ENCODE measurements at regions of chr3 and their contacts with region 1.

Region 1: DNA sequence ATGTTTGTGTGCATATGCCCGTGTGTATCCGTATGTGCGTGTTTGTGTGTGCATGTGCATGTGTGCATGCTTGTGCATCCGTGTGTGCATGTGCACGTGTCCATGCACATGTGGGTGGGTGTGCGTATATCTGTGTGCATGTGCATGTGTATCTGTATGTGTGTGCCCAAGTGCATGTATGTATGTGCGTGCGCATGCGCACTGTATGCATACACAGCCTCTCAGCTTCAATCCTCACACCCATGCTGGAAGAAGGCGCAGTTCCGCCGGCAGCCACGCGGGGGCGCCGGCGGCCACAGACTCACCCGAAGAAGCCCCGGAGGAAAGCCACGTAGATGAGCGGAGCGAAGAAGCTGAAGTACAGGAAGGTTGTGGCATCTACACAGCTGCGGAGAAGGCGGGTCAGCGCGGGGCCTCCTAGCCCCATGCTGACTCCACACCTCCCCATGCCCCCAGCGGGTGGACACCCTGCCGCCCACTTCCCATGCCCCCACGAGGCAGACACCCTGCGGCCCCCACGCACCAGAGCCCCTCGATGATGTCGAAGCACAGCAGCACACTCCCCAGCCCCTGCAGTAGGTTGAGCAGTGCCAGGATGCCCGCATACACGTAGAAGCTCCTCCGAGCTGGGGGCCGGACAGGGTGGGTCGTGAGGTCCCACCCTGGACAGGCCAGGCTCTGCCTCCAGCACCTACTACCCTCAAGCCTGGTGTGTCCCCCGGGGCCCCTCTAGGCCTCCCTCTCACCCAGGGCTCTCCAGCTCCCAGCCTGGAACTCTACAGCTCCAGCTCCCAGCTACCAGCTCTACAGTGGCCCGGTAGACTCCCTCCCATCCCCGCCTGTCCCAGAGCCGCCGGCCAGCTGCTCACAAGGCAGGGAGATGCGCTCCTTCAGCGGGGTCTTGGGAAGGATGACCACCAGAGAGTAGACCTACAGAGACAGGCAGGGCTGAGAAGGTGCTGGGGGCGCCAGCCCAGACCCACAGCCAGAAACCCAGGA is 15.4 kb downstream of the TPRA1 start:
- DNase-seq: peak; percentile 82 to 87 (median 84)
- H3K4me3 ChIP-seq: no peak overlapping the region
- H3K4me3 Mint-ChIP-seq: peak overlapping the region in 7 of 8 donors; percentile 14 to 63 (median 48)
- H3K27ac ChIP-seq: peak overlapping the region; percentile 16
- H3K27ac Mint-ChIP-seq: peak overlapping the region; percentile 24 to 92 (median 82)
- H3K4me1 ChIP-seq: peaks cover 9% of the 10 kb centered on the region
- H3K4me1 Mint-ChIP-seq: peaks cover 6 to 17% (median 11%) of the 10 kb centered on the region in 4 donors
- H3K27me3 ChIP-seq: no peaks in the 10 kb centered on the region
- H3K27me3 Mint-ChIP-seq: no peaks in the 10 kb centered on the region

Region 2: GRCh38 chr3:127529346-127530188 is 45.6 kb before region 1 on chr3:
- CTCF ChIA-PET with region 1: no interaction called
- POLR2A ChIA-PET with region 1: no interaction called
- intact Hi-C with region 1: no loop called
- DNase-seq: no peak
- H3K4me3 ChIP-seq: no peak overlapping the region
- H3K4me3 Mint-ChIP-seq: no peak overlapping the region
- H3K27ac ChIP-seq: no peak overlapping the region
- H3K27ac Mint-ChIP-seq: no peak overlapping the region
- H3K4me1 ChIP-seq: no peaks in the 10 kb centered on the region
- H3K4me1 Mint-ChIP-seq: no peaks in the 10 kb centered on the region
- H3K27me3 ChIP-seq: no peaks in the 10 kb centered on the region
- H3K27me3 Mint-ChIP-seq: peaks cover 4 to 16% of the 10 kb centered on the region in 2 donors

Region 3: DNA sequence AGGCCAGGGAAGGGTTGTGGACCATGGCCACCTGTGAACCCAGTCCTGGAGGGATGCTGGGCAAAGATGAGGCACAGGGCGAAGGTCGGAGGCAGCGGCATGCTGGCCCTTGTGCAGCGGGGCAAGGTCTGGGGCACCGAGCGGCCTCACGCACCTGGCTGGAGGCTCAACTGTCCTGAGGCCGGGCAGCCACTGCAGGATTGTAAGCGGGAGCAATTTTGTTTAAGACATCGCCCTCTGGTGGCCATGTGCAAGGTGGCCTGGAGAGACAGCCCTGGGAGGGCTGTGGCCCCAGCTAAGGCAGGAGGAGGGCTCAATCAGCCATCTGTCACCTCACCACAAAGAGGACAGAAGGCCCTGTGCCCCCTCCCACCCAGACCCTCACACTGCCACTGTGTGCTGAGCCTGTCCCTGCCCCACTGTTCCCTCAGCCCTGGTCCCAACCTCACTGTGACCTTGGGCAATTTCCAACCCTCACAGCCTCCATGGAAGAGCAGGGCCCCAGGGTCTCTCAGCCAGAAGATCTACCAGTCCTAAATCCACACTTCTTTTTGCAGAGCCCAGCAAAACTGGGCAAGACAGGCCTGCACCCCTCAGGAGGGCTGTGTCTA is 30.9 kb before region 1 on chr3:
- CTCF ChIA-PET with region 1: interaction called, 20 read pairs
- POLR2A ChIA-PET with region 1: no interaction called
- intact Hi-C with region 1: no loop called
- DNase-seq: peak; percentile 49 to 56 (median 50)
- H3K4me3 ChIP-seq: no peak overlapping the region
- H3K4me3 Mint-ChIP-seq: no peak overlapping the region
- H3K27ac ChIP-seq: no peak overlapping the region
- H3K27ac Mint-ChIP-seq: peak overlapping the region in 1 of 7 donors; percentile 10
- H3K4me1 ChIP-seq: peaks cover 14% of the 10 kb centered on the region
- H3K4me1 Mint-ChIP-seq: peaks cover 3 to 25% (median 11%) of the 10 kb centered on the region in 4 donors
- H3K27me3 ChIP-seq: no peaks in the 10 kb centered on the region
- H3K27me3 Mint-ChIP-seq: peaks cover 1 to 3% of the 10 kb centered on the region in 2 donors

Region 4: GRCh38 chr3:127598841-127599570 is 23.8 kb after region 1 on chr3:
- CTCF ChIA-PET with region 1: interaction called, 45 read pairs
- POLR2A ChIA-PET with region 1: interaction called, 3 read pairs
- intact Hi-C with region 1: loop called (anchors 1 kb)
- DNase-seq: no peak
- H3K4me3 ChIP-seq: peak overlapping the region; percentile 47 to 62
- H3K4me3 Mint-ChIP-seq: peak overlapping the region; percentile 78 to 90 (median 86)
- H3K27ac ChIP-seq: peak overlapping the region; percentile 51
- H3K27ac Mint-ChIP-seq: peak overlapping the region; percentile 22 to 97 (median 87)
- H3K4me1 ChIP-seq: peaks cover 19% of the 10 kb centered on the region
- H3K4me1 Mint-ChIP-seq: peaks cover 5 to 29% (median 15%) of the 10 kb centered on the region in 4 donors
- H3K27me3 ChIP-seq: no peaks in the 10 kb centered on the region
- H3K27me3 Mint-ChIP-seq: no peaks in the 10 kb centered on the region

Region 5: DNA sequence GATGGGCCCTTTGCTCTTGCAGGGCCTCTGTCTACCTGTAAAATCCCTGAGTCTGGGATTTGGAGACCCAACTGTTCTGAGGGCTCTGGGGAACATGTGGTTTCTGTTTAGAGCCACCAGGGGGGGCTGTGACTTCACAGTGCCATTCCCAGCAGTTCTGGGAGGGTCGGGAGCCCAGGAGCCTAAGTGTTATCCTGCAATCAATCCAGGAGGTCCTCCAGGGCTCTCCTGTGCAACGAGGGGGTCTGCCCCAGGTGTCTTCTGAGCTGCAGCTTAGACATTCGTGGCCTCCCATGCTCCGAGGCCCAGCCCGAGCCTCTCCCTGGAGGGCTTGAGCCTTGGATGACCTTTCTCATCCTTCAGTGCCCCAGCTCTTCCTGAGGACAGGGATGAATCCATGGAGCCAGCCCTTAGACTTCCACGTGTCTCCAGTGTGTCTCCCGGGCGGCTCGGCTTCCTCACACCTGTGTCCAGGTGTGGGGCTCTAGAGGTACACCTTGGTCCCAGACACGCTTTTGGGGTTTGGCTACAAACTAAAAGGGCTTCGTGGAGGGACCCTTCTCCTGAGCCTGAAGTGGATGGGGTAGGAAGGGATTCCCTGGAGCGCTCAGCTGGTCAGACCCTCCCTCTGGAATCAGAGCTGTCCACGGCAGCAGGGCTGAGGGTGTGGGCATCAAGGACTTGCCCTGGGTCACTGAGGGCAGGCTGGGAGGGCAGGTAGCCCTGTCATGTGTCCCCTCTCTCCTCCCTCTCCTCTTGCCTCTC is 77.2 kb after region 1 on chr3:
- CTCF ChIA-PET with region 1: interaction called, 5 read pairs
- POLR2A ChIA-PET with region 1: no interaction called
- intact Hi-C with region 1: loop called (anchors 1 kb)
- DNase-seq: peak in 3 of 5 donors; percentile 17 to 37 (median 22)
- H3K4me3 ChIP-seq: no peak overlapping the region
- H3K4me3 Mint-ChIP-seq: no peak overlapping the region
- H3K27ac ChIP-seq: no peak overlapping the region
- H3K27ac Mint-ChIP-seq: no peak overlapping the region
- H3K4me1 ChIP-seq: no peaks in the 10 kb centered on the region
- H3K4me1 Mint-ChIP-seq: no peaks in the 10 kb centered on the region
- H3K27me3 ChIP-seq: no peaks in the 10 kb centered on the region
- H3K27me3 Mint-ChIP-seq: no peaks in the 10 kb centered on the region

Region 6: DNA sequence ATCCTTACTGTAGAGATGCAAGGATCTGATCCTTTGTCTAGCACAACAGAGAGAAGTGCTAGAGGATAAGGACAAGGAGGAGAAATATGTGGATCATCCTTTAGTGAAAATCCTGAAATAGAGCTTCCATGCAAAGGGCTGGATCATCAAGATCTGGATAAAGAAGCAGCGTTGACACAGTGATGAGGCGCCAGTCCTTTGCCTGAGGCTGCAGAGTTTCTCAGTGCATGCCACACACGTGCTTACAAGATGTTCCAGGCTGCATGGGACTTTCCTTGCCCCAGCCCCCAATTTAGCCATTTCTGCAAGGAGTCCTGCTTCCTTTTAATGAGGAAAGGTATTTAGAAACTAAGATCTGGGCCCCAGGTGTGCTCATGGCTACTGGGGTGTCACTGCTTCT is 90.4 kb after region 1 on chr3:
- CTCF ChIA-PET with region 1: no interaction called
- POLR2A ChIA-PET with region 1: no interaction called
- intact Hi-C with region 1: no loop called
- DNase-seq: no peak
- H3K4me3 ChIP-seq: no peak overlapping the region
- H3K4me3 Mint-ChIP-seq: no peak overlapping the region
- H3K27ac ChIP-seq: no peak overlapping the region
- H3K27ac Mint-ChIP-seq: no peak overlapping the region
- H3K4me1 ChIP-seq: no peaks in the 10 kb centered on the region
- H3K4me1 Mint-ChIP-seq: no peaks in the 10 kb centered on the region
- H3K27me3 ChIP-seq: no peaks in the 10 kb centered on the region
- H3K27me3 Mint-ChIP-seq: no peaks in the 10 kb centered on the region

Region 7: DNA sequence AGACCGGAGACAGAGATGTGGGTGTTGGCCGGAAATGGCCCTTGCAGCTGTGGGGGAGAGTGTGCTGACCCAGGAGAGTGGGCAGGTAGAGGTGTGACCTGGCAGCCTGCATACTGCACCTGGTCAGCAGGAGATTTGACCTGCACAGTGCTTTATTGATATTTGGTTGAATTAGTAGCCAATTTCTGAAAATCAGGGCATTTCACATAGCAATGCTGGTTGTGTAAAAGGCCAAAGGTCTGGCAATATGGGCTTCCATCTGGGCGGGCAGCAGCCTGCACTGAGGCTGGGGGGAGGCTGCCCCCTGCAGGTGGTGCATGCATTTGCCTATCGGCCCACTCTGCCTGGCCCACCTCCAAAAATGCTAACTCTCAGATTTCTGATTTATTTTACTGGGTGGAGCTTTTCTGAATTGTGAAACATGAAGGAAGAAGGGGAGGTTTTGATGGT is 256.6 kb after region 1 on chr3:
- CTCF ChIA-PET with region 1: no interaction called
- POLR2A ChIA-PET with region 1: no interaction called
- intact Hi-C with region 1: loop called (anchors 5 kb)
- DNase-seq: peak in 2 of 5 donors; percentile 4 to 8
- H3K4me3 ChIP-seq: no peak overlapping the region
- H3K4me3 Mint-ChIP-seq: no peak overlapping the region
- H3K27ac ChIP-seq: no peak overlapping the region
- H3K27ac Mint-ChIP-seq: no peak overlapping the region
- H3K4me1 ChIP-seq: no peaks in the 10 kb centered on the region
- H3K4me1 Mint-ChIP-seq: no peaks in the 10 kb centered on the region
- H3K27me3 ChIP-seq: no peaks in the 10 kb centered on the region
- H3K27me3 Mint-ChIP-seq: peaks cover 12 to 13% of the 10 kb centered on the region in 2 donors